Activated B cell treated with CpG ODN at 0.5 μM for 24 hours (primary cell): ENCODE measurements at regions of chr6 and their contacts with region 1.

Region 1: GRCh38 chr6:3157131-3157927 is at the start of gene TUBB2A:
- DNase-seq: peak; percentile 91
- ATAC-seq: peak; percentile 89
- H3K4me3 Mint-ChIP-seq: peak within 1 kb of the TSS; percentile 85
- H3K27ac Mint-ChIP-seq: peak within 1 kb of the TSS; percentile 83
- H3K4me1 Mint-ChIP-seq: peaks cover 31% of the 10 kb centered on the region
- H3K27me3 Mint-ChIP-seq: peaks cover 3% of the 10 kb centered on the region
- CTCF ChIP-seq: no peak
- total RNA-seq, gene TUBB2A: 3.3 TPM in 2 replicates

Region 2: DNA sequence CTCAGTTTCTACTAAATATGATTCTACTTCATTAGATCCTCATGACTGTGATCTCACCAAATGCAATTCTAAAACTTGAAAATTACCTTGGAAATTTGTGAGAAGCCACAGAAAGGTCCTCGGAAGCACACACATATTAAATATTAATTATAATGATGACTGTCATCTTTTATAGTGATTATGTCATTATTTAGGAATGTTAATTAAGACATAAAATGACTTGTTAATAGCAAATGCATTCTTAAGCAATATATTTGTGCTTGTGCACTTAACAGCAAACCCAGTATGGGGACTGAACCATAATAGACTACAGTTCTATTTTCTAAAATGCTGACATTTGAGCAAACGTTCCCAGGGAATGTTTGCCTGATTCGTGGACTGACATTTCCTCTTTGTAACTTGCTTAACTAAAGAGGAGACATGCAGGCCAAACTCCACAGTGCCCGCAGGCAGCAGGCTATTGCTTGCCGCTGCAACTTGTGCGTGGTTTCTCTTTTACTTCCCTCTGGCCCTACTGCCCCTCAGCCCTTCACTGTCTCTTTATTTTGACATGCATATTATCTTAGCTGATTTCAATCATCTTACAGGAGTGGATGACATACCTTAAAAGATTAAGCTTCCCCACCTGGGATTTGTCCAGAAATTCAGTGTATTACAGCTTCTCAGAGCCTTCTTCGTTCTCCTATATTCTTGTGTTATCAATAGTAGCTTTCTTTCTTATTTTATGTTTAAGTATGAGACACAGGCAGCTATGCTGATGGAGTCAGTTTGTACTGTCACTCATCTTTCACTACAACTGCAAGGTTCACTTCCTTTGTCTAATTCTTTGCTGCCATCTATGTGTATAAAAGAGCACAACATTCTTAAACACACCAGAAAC is 1053.4 kb before region 1 on chr6:
- CTCF ChIA-PET with region 1: no interaction called
- POLR2A ChIA-PET with region 1: no interaction called
- intact Hi-C with region 1: no loop called
- DNase-seq: no peak
- ATAC-seq: peak; percentile 49
- H3K4me3 Mint-ChIP-seq: no peak overlapping the region
- H3K27ac Mint-ChIP-seq: no peak overlapping the region
- H3K4me1 Mint-ChIP-seq: no peaks in the 10 kb centered on the region
- H3K27me3 Mint-ChIP-seq: no peaks in the 10 kb centered on the region
- CTCF ChIP-seq: no peak

Region 3: DNA sequence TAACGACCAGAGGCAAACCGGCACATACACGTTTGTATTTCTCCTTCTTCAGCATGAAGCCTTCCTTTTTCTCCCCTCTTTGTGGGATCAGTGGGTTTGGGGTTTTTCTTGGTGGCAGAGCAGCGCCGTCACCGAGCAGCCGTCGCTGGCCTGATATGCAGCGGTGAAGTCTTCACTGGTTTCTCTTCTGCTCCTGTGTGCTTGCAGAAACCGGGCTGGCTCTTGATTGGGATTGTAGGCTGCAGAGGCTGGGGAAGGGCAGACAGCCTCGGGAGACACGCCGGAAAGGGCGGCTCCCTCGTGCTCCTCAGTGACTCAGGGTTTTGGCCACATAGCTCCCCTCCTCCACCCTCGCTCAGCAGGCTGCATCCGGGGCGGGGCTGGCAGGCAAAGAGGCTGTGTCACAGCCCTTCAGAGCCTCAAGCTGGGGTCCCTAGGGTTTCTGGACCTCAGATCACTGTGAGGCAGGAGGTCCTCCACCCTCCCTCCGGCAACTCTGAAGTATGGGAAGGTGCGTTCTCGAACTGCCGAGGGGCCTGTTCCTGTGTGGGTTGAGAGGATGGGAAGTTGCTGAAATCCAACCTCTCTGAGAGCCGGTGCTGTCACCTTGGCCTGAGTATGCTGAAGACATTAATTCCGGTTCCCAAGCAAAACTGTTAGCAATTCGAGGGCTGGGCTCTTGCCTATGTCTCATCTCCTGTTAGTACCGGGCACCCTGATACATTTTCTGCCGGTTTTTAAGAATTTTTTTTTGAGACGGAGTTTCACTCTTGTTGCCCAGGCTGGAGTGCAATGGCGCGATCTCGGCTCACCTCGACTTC is 133.5 kb before region 1 on chr6:
- CTCF ChIA-PET with region 1: no interaction called
- POLR2A ChIA-PET with region 1: no interaction called
- intact Hi-C with region 1: no loop called
- DNase-seq: peak; percentile 76
- ATAC-seq: peak; percentile 82
- H3K4me3 Mint-ChIP-seq: peak overlapping the region; percentile 90
- H3K27ac Mint-ChIP-seq: peak overlapping the region; percentile 88
- H3K4me1 Mint-ChIP-seq: peaks cover 54% of the 10 kb centered on the region
- H3K27me3 Mint-ChIP-seq: no peaks in the 10 kb centered on the region
- CTCF ChIP-seq: no peak

Region 4: DNA sequence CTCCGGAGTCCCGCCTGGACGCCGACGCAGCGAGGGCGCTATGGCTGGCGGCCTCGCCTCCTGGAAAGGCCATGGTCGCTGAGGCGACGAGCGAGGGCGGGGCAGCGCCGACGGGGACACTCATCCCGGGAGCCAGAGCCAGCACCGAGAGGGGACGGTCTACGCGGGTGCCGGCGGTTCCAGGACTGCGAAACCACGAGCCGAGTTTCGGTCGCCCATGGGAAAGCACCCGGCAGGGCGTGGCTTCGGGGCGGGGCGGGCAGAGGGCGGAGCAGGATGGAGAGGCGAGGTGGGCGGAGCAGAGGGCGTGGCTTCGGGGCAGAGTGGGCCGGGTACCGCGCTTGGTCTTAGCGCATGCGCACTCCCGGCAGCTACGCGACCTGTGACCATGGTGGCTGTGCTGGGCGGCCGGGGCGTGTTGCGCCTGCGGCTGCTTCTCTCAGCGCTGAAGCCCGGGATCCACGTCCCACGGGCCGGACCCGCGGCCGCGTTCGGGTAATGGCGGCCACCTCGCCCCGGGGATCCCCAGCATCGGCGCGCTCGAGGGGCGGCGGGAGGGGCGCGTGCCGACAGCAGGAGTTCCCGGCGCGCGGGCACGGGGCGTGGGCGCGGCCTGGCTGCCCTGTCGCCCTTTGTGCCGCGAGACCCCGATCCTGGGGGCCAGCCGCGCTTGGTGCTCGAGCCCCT is 38.8 kb before region 1 on chr6 and contains the start of gene BPHL:
- CTCF ChIA-PET with region 1: no interaction called
- POLR2A ChIA-PET with region 1: interaction called, 4 read pairs
- intact Hi-C with region 1: loop called (anchors 1 kb)
- DNase-seq: peak; percentile 100
- ATAC-seq: peak; percentile 92
- H3K4me3 Mint-ChIP-seq: peak within 1 kb of the TSS; percentile 89
- H3K27ac Mint-ChIP-seq: peak within 1 kb of the TSS; percentile 93
- H3K4me1 Mint-ChIP-seq: peaks cover 16% of the 10 kb centered on the region
- H3K27me3 Mint-ChIP-seq: no peaks in the 10 kb centered on the region
- CTCF ChIP-seq: no peak
- total RNA-seq, gene BPHL: 10.5 and 11.0 TPM in 2 replicates

Region 5: GRCh38 chr6:3180350-3180749 is 23.0 kb after region 1 on chr6:
- CTCF ChIA-PET with region 1: no interaction called
- POLR2A ChIA-PET with region 1: interaction called, 7 read pairs
- intact Hi-C with region 1: loop called (anchors 1 kb)
- DNase-seq: no peak
- ATAC-seq: no peak
- H3K4me3 Mint-ChIP-seq: no peak overlapping the region
- H3K27ac Mint-ChIP-seq: no peak overlapping the region
- H3K4me1 Mint-ChIP-seq: peaks cover 1% of the 10 kb centered on the region
- H3K27me3 Mint-ChIP-seq: peaks cover 24% of the 10 kb centered on the region
- CTCF ChIP-seq: no peak

Region 6: DNA sequence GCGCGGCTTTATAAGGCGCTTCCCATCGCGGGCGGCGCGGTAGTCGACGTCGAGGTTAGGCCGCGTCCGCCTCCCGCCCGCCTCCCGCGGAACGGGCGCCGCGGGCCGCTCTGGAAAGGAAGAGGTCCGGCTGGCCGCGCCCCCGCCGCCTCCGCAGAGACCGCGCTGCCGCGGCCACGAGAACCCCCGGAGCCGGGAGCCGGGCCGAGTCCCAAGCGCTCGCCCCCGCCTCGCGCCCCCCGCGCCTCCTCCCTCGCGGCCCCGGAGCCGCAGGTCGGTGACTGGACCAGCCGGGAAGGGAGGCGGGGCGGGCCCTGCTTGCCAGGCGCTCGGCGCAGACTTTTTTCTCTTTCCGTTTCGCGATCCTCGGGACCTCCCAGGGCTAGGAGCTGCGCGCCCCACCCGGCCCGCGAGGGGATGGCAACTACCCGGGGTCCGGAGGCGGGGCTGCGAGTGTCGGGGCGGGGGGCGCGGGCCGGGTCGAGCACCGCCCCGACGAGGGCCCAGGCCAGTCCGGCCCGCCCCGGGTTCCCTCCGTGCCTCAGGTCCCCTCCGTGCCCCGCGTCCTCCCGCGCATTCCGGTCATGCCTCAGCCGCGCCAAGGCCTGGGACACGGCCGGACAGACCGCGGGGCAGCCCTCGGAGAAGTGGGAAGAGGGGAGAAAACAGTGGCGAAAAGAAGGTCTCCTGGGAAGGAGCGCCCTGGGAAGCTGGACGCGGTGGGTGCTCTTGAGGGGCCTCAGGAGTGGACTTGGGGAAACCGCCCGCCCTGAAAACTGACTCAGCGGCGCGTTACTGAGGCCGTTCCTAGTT is 594.6 kb after region 1 on chr6:
- CTCF ChIA-PET with region 1: no interaction called
- POLR2A ChIA-PET with region 1: no interaction called
- intact Hi-C with region 1: loop called (anchors 5 kb)
- DNase-seq: peak; percentile 72
- ATAC-seq: peak; percentile 73
- H3K4me3 Mint-ChIP-seq: peak overlapping the region; percentile 72
- H3K27ac Mint-ChIP-seq: no peak overlapping the region
- H3K4me1 Mint-ChIP-seq: peaks cover 52% of the 10 kb centered on the region
- H3K27me3 Mint-ChIP-seq: no peaks in the 10 kb centered on the region
- CTCF ChIP-seq: no peak